GM10248 (cell line): ENCODE measurements at regions of chr6 and their contacts with region 1.

Region 1: GRCh38 chr6:31795616-31796298 is at the start of gene VARS1:
- DNase-seq: peak; percentile 97
- CTCF ChIP-seq: peak; percentile 86

Region 2: GRCh38 chr6:31285486-31285885 is 510.3 kb before region 1 on chr6:
- CTCF ChIA-PET with region 1: no interaction called
- POLR2A ChIA-PET with region 1: no interaction called
- DNase-seq: no peak
- CTCF ChIP-seq: no peak

Region 3: GRCh38 chr6:31739639-31740396 is 55.9 kb before region 1 on chr6 and contains the start of gene MSH5:
- CTCF ChIA-PET with region 1: interaction called, 13 read pairs
- POLR2A ChIA-PET with region 1: interaction called, 5 read pairs
- DNase-seq: peak; percentile 97
- CTCF ChIP-seq: no peak

Region 4: DNA sequence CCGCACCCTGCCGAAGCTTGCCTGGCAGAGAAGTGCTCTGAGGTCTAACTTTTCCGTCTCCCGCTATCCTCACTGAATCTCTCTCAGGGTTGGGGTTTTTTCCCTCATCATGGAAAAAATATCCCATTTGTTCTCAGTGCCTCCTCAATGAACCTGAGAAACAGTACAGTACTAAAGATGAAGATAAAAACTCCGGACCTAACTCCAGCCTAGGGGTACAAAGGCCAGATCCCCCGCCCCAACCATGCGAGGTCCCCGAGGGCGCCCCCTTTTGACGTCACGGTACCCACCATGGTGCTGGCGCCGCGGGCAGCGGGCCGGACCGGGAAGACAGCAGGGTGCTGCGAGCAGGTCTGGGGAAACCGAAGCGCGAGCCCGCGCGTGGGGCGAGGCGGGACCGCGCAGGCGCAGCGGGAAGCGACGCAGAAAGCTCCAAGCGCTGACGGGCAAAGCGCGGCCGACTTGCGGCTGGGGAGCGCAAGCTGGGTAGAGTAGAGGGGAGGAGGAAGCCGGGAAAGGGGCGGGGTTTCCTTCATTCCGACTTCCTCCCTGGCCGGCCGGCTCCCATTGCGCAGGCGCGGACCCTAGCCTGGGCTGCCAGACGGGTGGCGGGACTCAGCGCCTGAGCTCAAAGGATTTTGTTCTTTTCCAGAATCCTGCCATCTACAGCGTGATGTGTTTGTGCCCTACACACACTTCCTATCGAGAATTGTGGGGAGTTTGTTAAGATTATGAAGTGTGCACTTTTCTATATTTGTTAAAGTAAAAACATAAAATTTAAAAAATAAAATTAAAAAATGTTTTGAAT is 10.9 kb after region 1 on chr6 and contains the start of gene LSM2:
- CTCF ChIA-PET with region 1: interaction called, 37 read pairs
- POLR2A ChIA-PET with region 1: interaction called, 12 read pairs
- DNase-seq: peak; percentile 100
- CTCF ChIP-seq: peak; percentile 39

Region 5: GRCh38 chr6:32581315-32582095 is 785.7 kb after region 1 on chr6:
- CTCF ChIA-PET with region 1: no interaction called
- POLR2A ChIA-PET with region 1: no interaction called
- DNase-seq: no peak
- CTCF ChIP-seq: no peak